H1 (cell line): ENCODE measurements at regions of chr9 and their contacts with region 1.

Region 1: DNA sequence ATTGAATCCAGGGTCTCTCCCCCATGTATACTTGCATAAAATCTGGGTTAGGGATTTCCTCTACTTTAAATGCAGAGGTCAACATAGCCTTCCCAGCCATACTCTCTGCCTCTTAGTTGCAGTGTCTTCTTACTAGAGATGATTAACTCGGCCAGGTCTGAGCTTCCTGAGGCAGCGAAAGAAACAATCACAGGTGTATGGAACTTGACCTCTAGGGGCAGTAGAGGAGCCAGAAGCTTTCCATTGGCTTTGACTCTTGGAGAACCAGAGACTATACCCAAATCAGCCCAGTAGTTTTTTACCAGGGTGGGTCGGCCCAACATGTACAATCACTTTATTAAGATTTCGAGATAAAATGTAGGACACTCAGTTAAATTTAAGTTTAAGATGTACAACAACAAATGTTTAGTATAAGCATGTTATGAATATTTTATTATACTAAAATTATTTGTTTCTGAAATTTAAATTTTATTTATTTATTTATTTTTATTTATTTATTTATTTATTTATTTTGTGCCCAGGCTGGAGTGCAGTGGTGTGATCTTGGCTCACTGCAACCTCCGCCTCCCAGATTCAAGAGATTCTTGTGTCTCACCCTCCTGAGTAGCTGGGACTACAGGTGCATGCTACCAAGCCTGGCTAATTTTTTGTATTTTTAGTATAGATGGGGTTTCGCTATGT is 48.0 kb upstream of the DMRT3 start:
- DNase-seq: peak; percentile 19 to 54
- H3K4me3 ChIP-seq: no peak overlapping the region
- H3K27ac ChIP-seq: no peak overlapping the region
- H3K4me1 ChIP-seq: no peaks in the 10 kb centered on the region
- H3K27me3 ChIP-seq: no peaks in the 10 kb centered on the region
- CTCF ChIP-seq: peak; percentile 30 to 79 (median 64)
- EP300 ChIP-seq: no peak
- POLR2A ChIP-seq: no peak
- RAD21 ChIP-seq: peak; percentile 18 to 49; a peak in 3 of 4 replicates

Region 2: DNA sequence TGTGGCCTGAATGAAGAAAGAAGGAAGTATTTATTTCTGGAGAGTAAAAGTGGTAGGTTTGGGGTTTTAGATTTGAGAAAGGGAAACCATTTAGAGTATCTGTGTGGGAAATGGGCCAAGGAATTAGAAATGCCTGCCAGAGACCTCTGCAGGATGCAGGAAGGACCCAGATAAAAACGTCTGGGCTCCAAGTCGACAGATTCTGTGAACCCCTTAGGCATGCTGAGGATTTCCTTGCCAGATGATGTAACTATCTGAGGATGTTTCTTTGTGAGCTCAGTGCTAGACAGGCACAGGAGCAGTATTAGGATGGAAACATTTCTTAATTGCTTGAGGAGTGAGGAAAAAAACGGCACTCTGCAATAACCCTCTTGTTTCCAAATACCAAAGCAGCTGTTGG is 338.8 kb before region 1 on chr9:
- CTCF ChIA-PET with region 1: no interaction called
- POLR2A ChIA-PET with region 1: no interaction called
- DNase-seq: no peak
- H3K4me3 ChIP-seq: no peak overlapping the region
- H3K27ac ChIP-seq: no peak overlapping the region
- H3K4me1 ChIP-seq: peaks cover 0 to 4% (median under 1%) of the 10 kb centered on the region in 4 experiments; a peak in 3 of 7 replicates
- H3K27me3 ChIP-seq: no peaks in the 10 kb centered on the region
- CTCF ChIP-seq: no peak
- EP300 ChIP-seq: no peak
- POLR2A ChIP-seq: no peak
- RAD21 ChIP-seq: no peak

Region 3: GRCh38 chr9:859251-859650 is 69.3 kb before region 1 on chr9:
- CTCF ChIA-PET with region 1: no interaction called
- POLR2A ChIA-PET with region 1: no interaction called
- DNase-seq: no peak
- H3K4me3 ChIP-seq: no peak overlapping the region
- H3K27ac ChIP-seq: no peak overlapping the region
- H3K4me1 ChIP-seq: no peaks in the 10 kb centered on the region
- H3K27me3 ChIP-seq: no peaks in the 10 kb centered on the region
- CTCF ChIP-seq: no peak
- EP300 ChIP-seq: no peak
- POLR2A ChIP-seq: no peak
- RAD21 ChIP-seq: no peak

Region 4: GRCh38 chr9:893843-894420 is 34.6 kb before region 1 on chr9:
- CTCF ChIA-PET with region 1: interaction called, 85 read pairs
- POLR2A ChIA-PET with region 1: no interaction called
- DNase-seq: peak; percentile 10 to 66
- H3K4me3 ChIP-seq: no peak overlapping the region
- H3K27ac ChIP-seq: no peak overlapping the region
- H3K4me1 ChIP-seq: peaks cover 0 to 12% (median 0%) of the 10 kb centered on the region in 4 experiments; a peak in 1 of 7 replicates
- H3K27me3 ChIP-seq: peaks cover 0 to 9% (median 0%) of the 10 kb centered on the region in 4 experiments; a peak in 2 of 7 replicates
- CTCF ChIP-seq: peak; percentile 67 to 96 (median 86)
- EP300 ChIP-seq: no peak
- POLR2A ChIP-seq: no peak
- RAD21 ChIP-seq: peak; percentile 94 to 96

Region 5: DNA sequence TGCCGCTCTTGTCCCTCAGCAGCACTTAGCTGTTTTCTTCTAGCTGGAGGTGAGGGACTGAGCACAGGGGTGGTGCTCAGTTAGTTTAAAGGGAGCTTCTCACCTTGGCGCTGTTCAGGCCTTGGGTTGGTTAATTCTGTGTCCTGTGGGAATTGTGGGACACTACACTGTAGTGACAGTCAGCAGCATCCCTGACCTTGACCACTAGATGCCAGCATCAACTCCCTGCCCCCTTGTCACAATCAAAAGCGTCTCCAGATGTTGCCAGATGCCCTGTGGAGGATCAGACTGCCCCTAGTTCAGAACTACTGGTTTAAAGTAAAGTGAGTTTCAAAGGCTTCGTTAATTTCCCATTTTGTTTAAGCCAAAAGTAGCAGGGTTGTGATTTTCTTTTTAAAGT is 17.5 kb before region 1 on chr9:
- CTCF ChIA-PET with region 1: interaction called, 54 read pairs
- POLR2A ChIA-PET with region 1: interaction called, 4 read pairs
- DNase-seq: peak in 1 of 2 experiments; percentile 19
- H3K4me3 ChIP-seq: no peak overlapping the region
- H3K27ac ChIP-seq: no peak overlapping the region
- H3K4me1 ChIP-seq: peaks cover 0 to 11% (median 2%) of the 10 kb centered on the region in 4 experiments; a peak in 3 of 7 replicates
- H3K27me3 ChIP-seq: no peaks in the 10 kb centered on the region; a peak in 1 of 7 replicates
- CTCF ChIP-seq: peak; percentile 59 to 70 (median 68)
- EP300 ChIP-seq: no peak
- POLR2A ChIP-seq: no peak
- RAD21 ChIP-seq: peak; percentile 49 to 68

Region 6: GRCh38 chr9:950139-950538 is 21.6 kb after region 1 on chr9:
- CTCF ChIA-PET with region 1: interaction called, 97 read pairs
- POLR2A ChIA-PET with region 1: no interaction called
- DNase-seq: no peak
- H3K4me3 ChIP-seq: no peak overlapping the region
- H3K27ac ChIP-seq: no peak overlapping the region
- H3K4me1 ChIP-seq: peaks cover 0 to 2% (median 0%) of the 10 kb centered on the region in 4 experiments; a peak in 1 of 7 replicates
- H3K27me3 ChIP-seq: no peaks in the 10 kb centered on the region
- CTCF ChIP-seq: peak; percentile 16 to 61 (median 56); a peak in 3 of 4 replicates
- EP300 ChIP-seq: no peak
- POLR2A ChIP-seq: no peak
- RAD21 ChIP-seq: no peak

Region 7: GRCh38 chr9:976258-976942 is 47.9 kb after region 1 on chr9 and contains the start of gene DMRT3:
- CTCF ChIA-PET with region 1: interaction called, 23 read pairs
- POLR2A ChIA-PET with region 1: no interaction called
- DNase-seq: peak in 1 of 2 experiments; percentile 83
- H3K4me3 ChIP-seq: peak within 1 kb of the TSS; percentile 33 to 63 (median 40)
- H3K27ac ChIP-seq: no peak within 1 kb of the TSS
- H3K4me1 ChIP-seq: peaks cover 13 to 36% (median 23%) of the 10 kb centered on the region in 4 experiments
- H3K27me3 ChIP-seq: peaks cover 77 to 96% (median 92%) of the 10 kb centered on the region in 4 experiments
- CTCF ChIP-seq: peak in 1 of 3 experiments; percentile 22; a peak in 1 of 4 replicates
- EP300 ChIP-seq: no peak
- POLR2A ChIP-seq: no peak
- RAD21 ChIP-seq: no peak; a peak in 1 of 4 replicates
- total RNA-seq, gene DMRT3: not detected in 2 replicates